ENCODE measurements at regions of chr22 and their contacts with region 1.

Region 1: GRCh38 chr22:33579448-33580093 is 340.7 kb downstream of the LARGE1 start:
- DNase-seq: peak; percentile 78

Region 2: GRCh38 chr22:33302049-33302545 is 277.5 kb before region 1 on chr22:
- intact Hi-C with region 1: loop called (anchors 5 kb)
- DNase-seq: peak; percentile 88

Region 3: DNA sequence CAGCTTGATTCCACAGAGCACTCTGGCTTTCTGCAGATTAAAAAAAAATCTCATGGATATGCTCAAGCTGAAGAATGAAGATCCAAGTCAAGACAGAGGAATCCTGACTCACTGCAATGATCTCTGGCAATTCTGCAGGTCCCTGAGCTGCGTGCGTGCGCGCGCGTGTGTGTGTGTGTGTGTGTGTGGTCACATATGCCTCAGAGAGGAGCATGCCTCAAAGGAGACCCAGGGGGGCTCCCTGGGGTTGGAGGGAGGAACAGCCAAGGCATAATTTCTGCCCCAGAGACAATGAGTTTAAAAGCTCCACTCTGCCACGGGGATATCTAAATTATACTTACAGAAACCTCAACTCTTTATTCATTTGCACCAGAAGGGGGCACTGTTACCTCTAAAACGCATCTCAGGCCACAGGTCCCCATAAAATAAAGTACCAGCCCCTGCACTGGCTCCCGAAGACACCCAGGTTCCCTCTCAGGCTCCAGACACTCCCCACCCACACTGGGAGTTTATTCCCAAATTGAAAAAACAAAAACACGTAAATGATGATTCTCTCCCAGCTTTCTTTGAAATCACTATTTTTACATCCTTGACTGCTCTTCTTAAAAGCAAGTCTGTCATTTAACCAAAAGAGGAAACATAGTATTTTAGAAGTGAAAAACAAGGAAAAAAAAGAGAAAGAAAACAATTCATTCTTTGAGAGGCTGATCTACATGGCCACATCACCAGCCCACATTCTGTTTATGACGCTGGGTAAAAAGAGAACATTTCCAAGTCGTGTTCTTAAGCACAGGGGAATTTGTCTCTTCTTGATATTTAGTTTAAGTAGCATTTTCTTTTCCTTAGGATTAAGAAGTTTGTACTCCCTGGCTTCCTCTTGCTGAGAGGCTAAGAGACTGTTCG is 60.2 kb before region 1 on chr22:
- intact Hi-C with region 1: loop called (anchors 2 kb)
- DNase-seq: no peak

Region 4: DNA sequence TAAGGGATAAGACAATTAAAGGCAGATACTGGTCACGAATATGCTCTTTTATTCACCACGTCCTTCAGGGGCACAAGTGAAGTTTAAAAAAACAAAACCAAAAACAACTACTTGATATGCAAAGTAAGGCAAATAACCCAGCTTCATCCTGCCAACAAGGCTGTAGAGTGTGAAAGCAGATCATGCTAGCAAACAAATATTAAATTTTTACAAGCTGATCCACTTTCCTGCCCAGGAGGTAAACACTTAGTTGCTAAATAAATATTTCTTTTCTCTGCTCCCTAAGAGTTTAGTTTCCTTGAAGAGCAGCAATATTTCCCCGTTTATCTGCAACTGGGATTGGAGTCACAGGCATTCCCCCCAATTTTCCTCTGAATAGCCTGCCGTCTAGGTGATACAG is 40.5 kb after region 1 on chr22:
- intact Hi-C with region 1: no loop called
- DNase-seq: no peak

Measured in cardiac septum (tissue), 1 donor.